ENCODE measurements at regions of chr6 and their contacts with region 1.

Region 1: DNA sequence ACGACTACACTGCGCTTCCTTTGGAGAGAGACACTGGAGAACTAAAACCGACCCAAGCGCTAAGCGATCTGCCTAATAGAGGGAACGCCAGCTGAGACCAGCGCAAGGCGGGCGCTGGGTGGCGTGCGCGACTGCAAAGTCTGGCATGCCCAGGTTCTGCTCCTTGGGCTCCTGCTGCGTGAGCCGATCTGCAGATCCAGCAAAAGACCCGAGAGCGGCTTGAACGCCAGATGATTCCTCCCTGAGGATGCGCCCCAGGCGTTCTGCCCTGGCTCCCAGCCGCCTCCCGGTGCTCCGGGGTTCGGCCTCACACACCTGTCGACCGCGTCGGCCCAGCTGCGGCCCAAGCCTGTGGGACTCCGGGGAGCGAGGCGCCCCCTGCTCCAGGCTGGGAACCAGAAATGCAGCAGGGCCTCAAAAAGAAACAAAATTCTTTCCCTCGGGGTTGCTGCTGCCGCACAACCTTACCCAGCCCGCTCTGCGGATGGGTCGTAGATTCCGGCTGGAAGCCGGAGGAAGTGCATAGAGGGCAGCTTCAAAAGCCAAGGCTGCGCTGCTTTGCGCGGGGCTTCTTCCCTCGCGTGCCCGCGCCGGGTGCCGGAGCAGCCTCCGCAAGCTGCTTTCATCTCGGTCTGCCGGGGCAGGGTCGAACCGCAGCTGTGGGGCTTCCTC is 17.9 kb upstream of the PRDM13 start:
- DNase-seq: peak; percentile 58 to 81
- ATAC-seq: peak; percentile 99
- H3K4me3 ChIP-seq: peak overlapping the region; percentile 53
- H3K27ac ChIP-seq: peak overlapping the region; percentile 50 to 82; a peak in 5 of 6 replicates
- H3K4me1 ChIP-seq: no peaks in the 10 kb centered on the region
- CTCF ChIP-seq: peak; percentile 58
- EP300 ChIP-seq: no peak
- POLR2A ChIP-seq: no peak
- RAD21 ChIP-seq: peak; percentile 68 to 72

Region 2: GRCh38 chr6:98920904-98921431 is 667.8 kb before region 1 on chr6:
- CTCF ChIA-PET with region 1: no interaction called
- POLR2A ChIA-PET with region 1: no interaction called
- DNase-seq: no peak
- ATAC-seq: no peak
- H3K4me3 ChIP-seq: no peak overlapping the region
- H3K27ac ChIP-seq: no peak overlapping the region
- H3K4me1 ChIP-seq: no peaks in the 10 kb centered on the region
- CTCF ChIP-seq: no peak
- EP300 ChIP-seq: no peak
- POLR2A ChIP-seq: no peak
- RAD21 ChIP-seq: no peak

Region 3: DNA sequence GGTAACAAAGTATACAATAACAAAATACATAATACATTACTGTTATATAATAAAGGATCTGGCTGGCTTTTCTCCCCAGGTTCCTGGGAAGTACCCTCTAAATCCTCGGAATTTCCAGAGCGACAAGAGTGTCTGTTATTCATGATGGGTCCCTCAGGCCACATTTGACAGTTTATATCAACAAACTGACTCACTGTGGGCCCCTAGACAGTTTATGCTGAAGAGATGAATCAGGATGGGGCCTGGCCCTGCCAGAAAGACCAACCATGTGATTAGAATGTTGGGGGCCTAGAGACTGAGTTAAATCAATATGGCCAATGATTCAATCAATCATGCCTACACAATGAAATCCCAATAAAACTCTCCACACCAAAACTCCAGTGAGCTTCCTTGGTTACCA is 87.0 kb before region 1 on chr6:
- CTCF ChIA-PET with region 1: no interaction called
- POLR2A ChIA-PET with region 1: no interaction called
- DNase-seq: no peak
- ATAC-seq: no peak
- H3K4me3 ChIP-seq: no peak overlapping the region
- H3K27ac ChIP-seq: no peak overlapping the region
- H3K4me1 ChIP-seq: no peaks in the 10 kb centered on the region
- CTCF ChIP-seq: no peak
- EP300 ChIP-seq: no peak
- POLR2A ChIP-seq: no peak
- RAD21 ChIP-seq: no peak

Region 4: GRCh38 chr6:99603421-99604165 is 14.8 kb after region 1 on chr6:
- CTCF ChIA-PET with region 1: interaction called, 12 read pairs
- POLR2A ChIA-PET with region 1: no interaction called
- DNase-seq: peak; percentile 13 to 14
- ATAC-seq: peak; percentile 73 to 87
- H3K4me3 ChIP-seq: peak overlapping the region; percentile 46
- H3K27ac ChIP-seq: peak overlapping the region; percentile 26 to 70; a peak in 4 of 6 replicates
- H3K4me1 ChIP-seq: no peaks in the 10 kb centered on the region
- CTCF ChIP-seq: no peak
- EP300 ChIP-seq: no peak
- POLR2A ChIP-seq: no peak
- RAD21 ChIP-seq: no peak

Region 5: GRCh38 chr6:99613409-99613704 is 24.6 kb after region 1 on chr6:
- CTCF ChIA-PET with region 1: interaction called, 18 read pairs
- POLR2A ChIA-PET with region 1: no interaction called
- DNase-seq: peak; percentile 31 to 66
- ATAC-seq: peak; percentile 81 to 90
- H3K4me3 ChIP-seq: peak overlapping the region; percentile 57
- H3K27ac ChIP-seq: peak overlapping the region; percentile 72 to 82
- H3K4me1 ChIP-seq: no peaks in the 10 kb centered on the region
- CTCF ChIP-seq: peak; percentile 46
- EP300 ChIP-seq: no peak
- POLR2A ChIP-seq: no peak
- RAD21 ChIP-seq: peak in 1 of 2 experiments; percentile 15; a peak in 1 of 5 replicates

Region 6: DNA sequence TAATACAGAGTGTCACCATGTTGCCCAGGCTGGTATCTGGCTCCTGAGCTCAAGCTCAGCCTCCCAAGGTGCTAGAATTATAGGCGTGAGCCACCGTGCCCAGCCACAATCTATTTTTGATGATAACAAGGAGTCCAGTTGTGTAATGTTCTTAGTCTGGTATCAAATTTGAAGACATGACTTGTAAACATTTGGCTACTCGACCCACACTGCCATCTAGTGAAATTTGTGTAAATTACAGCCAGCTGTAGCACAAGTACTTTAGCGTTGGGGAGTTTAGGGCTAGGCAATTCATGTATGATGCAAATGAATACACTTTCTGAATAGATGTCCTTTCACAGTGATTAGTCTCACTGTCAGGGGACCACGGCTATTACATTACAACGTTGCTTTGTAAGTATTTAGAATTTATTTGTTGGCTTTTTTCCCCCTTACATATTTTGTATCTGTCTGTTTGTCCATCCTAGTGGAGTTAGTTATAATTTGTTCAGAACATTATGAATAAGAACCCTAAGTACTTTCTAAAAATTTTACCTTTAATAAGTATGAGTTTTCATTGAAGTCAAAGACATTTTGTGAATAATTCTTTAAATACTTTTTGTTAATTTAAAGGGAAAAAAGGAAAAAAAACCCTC is 157.6 kb after region 1 on chr6:
- CTCF ChIA-PET with region 1: interaction called, 21 read pairs
- POLR2A ChIA-PET with region 1: interaction called, 4 read pairs
- DNase-seq: peak; percentile 11 to 72
- ATAC-seq: peak; percentile 62 to 79; a peak in 5 of 6 replicates
- H3K4me3 ChIP-seq: no peak overlapping the region
- H3K27ac ChIP-seq: no peak overlapping the region
- H3K4me1 ChIP-seq: no peaks in the 10 kb centered on the region
- CTCF ChIP-seq: peak; percentile 57
- EP300 ChIP-seq: no peak
- POLR2A ChIP-seq: no peak
- RAD21 ChIP-seq: peak; percentile 58 to 61

Measured in A549 (cell line).